Esophagus muscularis mucosa (tissue), 4 donors: ENCODE measurements at regions of chr17 and their contacts with region 1.

Region 1: GRCh38 chr17:20992987-20993862 is 49.6 kb downstream of the USP22 start:
- DNase-seq: no peak
- H3K4me3 ChIP-seq: peak overlapping the region; percentile 10 to 16 (median 14)
- H3K27ac ChIP-seq: no peak overlapping the region
- H3K4me1 ChIP-seq: peaks cover 15 to 39% (median 26%) of the 10 kb centered on the region in 4 donors
- H3K27me3 ChIP-seq: no peaks in the 10 kb centered on the region
- CTCF ChIP-seq: peak; percentile 80 to 91 (median 85)
- EP300 ChIP-seq: no peak
- POLR2A ChIP-seq: no peak

Region 2: GRCh38 chr17:20226814-20227482 is 766.3 kb before region 1 on chr17:
- intact Hi-C with region 1: loop called (anchors 10 kb)
- DNase-seq: no peak
- H3K4me3 ChIP-seq: no peak overlapping the region
- H3K27ac ChIP-seq: no peak overlapping the region
- H3K4me1 ChIP-seq: peaks cover 0 to 7% (median 5%) of the 10 kb centered on the region in 4 donors
- H3K27me3 ChIP-seq: no peaks in the 10 kb centered on the region
- CTCF ChIP-seq: peak; percentile 65 to 85 (median 67)
- EP300 ChIP-seq: no peak
- POLR2A ChIP-seq: no peak

Region 3: DNA sequence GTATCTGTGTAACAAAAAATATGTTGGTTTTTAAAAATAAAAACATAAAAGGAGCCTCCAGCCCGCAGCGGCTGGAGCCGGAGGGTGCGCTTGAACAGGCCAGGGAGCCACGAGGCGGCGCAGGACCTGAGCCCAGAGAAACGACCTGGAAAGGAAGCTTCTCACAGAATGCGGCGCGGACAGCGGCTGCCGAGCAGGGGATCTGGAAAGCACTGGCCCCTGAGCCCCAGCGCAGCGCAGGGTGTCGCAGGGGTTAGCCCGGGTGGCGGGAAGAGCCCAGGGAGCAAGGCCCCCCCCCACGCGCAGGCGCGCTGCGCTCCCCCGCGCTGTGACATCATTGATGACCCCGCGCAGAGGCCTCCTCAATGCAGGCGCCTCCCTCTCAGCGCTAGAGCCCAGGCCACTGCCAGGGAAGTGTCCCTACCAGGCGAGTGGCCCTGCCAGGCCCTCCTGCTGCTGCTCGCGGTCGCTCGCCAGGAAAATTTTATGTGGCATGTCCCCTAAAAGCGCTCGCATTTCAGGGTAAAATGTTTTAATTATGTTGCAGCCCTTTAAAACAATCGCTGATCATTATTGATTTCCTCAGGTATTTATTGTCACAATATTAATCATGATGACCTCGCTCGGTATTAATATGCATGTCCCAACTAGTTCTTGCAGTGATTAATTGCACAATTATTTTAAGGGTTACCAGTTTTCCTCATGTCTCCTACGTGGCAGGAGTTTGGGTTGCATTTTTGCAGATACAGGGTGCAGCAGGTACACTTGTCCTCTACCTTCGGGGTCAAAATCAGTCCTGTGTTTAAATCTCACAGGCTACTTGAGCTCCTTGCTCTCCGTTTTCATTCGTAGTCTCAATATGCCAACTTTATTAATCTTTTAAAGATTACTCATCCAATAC is 84.6 kb before region 1 on chr17:
- intact Hi-C with region 1: loop called (anchors 5 kb)
- DNase-seq: peak; percentile 95
- H3K4me3 ChIP-seq: peak overlapping the region; percentile 52 to 62 (median 57)
- H3K27ac ChIP-seq: peak overlapping the region; percentile 80 to 88 (median 87)
- H3K4me1 ChIP-seq: peaks cover 5 to 17% (median 13%) of the 10 kb centered on the region in 4 donors
- H3K27me3 ChIP-seq: no peaks in the 10 kb centered on the region
- CTCF ChIP-seq: peak; percentile 64 to 69 (median 69)
- EP300 ChIP-seq: no peak
- POLR2A ChIP-seq: no peak

Region 4: DNA sequence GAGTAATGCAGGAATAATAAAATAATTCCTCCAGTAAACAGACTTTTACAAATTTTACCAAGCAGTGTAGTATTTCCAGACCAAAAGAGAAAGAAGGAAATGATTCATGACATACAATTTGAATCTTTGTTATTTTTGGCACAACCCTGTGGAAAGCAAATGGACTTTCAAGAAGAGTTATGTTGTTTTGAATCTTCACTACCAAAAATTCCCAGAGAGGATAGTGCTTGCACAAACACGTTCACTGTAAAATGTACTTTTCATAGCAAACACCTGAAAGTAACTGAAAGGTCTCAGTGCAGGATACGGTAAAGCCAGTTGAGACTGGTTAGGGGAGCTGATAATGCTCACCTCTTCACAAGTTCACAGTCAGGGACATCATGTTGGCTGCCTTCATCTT is 57.5 kb before region 1 on chr17:
- intact Hi-C with region 1: loop called (anchors 10 kb)
- DNase-seq: no peak
- H3K4me3 ChIP-seq: no peak overlapping the region
- H3K27ac ChIP-seq: peak overlapping the region in 1 of 4 donors; percentile 17
- H3K4me1 ChIP-seq: peaks cover 4 to 23% (median 12%) of the 10 kb centered on the region in 4 donors
- H3K27me3 ChIP-seq: no peaks in the 10 kb centered on the region
- CTCF ChIP-seq: no peak
- EP300 ChIP-seq: no peak
- POLR2A ChIP-seq: no peak

Region 5: GRCh38 chr17:21113716-21114115 is 120.5 kb after region 1 on chr17:
- intact Hi-C with region 1: no loop called
- DNase-seq: no peak
- H3K4me3 ChIP-seq: no peak overlapping the region
- H3K27ac ChIP-seq: no peak overlapping the region
- H3K4me1 ChIP-seq: no peaks in the 10 kb centered on the region
- H3K27me3 ChIP-seq: no peaks in the 10 kb centered on the region
- CTCF ChIP-seq: no peak
- EP300 ChIP-seq: no peak
- POLR2A ChIP-seq: no peak